PC-9 (cell line): ENCODE measurements at regions of chr7 and their contacts with region 1.

Region 1: DNA sequence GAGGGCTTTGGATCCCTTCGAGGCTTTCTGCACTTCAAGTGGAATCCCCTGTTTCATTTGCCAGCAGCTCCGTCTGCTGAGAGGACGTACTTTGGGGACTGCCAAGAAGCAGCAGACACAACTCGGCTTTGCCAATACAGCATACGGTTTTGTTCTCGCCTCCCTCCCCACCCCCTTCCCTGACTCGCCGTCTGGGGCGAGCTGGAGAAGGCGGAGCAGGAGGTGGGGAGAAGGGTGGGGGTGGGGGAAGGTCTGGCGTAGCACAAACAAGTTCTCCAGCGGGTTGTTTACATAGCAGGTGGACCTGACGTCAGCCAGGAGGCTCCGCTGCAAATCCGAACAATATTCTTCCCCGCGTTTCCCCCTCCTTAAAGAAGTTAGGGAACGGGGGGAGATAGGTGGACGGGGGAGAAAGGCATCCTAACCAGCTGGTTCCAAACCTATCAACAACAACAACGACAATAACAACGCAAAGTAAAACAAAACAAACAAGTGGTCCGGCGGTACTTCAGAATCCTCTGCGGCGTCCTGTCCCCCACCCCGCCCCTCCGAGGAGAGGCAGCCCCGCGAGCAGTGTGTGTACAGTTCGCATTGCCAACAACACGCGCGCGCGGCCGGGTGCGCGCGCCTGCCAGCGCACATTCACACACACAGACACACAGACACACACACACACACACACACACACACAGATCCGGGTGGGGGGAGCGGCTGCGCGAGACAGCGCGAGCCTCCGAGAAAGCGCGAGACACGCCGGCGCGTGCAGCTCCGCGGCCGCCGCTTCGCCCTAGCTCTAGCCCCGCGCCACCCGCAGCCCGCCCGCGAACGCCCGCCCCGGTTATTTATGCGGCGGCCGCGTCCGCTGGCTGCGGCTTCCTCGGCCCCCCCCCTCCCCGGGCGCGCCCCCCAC is 167.0 kb upstream of the PPP1R3A start:
- DNase-seq: peak; percentile 77 to 82
- H3K4me3 ChIP-seq: peak overlapping the region; percentile 88
- H3K27ac ChIP-seq: peak overlapping the region; percentile 20; the same call in 1 of the 2 replicates
- H3K4me1 ChIP-seq: peaks cover 11% of the 10 kb centered on the region; the same call in 1 of the 2 replicates
- H3K27me3 ChIP-seq: peaks cover 5% of the 10 kb centered on the region
- CTCF ChIP-seq: no peak

Region 2: DNA sequence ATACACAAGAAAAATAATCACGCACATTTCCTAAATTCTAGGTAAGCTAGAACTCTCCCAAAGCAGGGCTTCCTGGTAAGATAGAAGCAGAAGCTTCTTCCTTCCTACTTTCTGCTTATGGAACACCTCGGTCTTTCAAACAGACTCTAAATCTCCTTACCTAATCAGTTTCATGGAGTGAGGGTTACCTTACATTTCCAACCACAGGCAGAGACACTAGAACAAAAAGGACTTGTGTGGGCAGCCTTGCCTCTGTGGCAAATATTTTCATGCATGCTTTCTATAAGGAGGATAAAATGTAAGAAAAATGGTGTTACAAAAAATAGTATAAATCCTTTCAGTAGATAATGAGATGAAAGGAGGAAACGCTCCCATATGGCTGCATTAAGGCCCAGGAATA is 581.2 kb before region 1 on chr7:
- CTCF ChIA-PET with region 1: no interaction called
- POLR2A ChIA-PET with region 1: no interaction called
- intact Hi-C with region 1: no loop called
- DNase-seq: no peak
- H3K4me3 ChIP-seq: no peak overlapping the region
- H3K27ac ChIP-seq: no peak overlapping the region
- H3K4me1 ChIP-seq: no peaks in the 10 kb centered on the region
- H3K27me3 ChIP-seq: no peaks in the 10 kb centered on the region
- CTCF ChIP-seq: no peak

Region 3: GRCh38 chr7:114026486-114027089 is 59.3 kb before region 1 on chr7:
- CTCF ChIA-PET with region 1: interaction called, 3 read pairs
- POLR2A ChIA-PET with region 1: no interaction called
- intact Hi-C with region 1: loop called (anchors 2 kb)
- DNase-seq: no peak
- H3K4me3 ChIP-seq: no peak overlapping the region
- H3K27ac ChIP-seq: no peak overlapping the region
- H3K4me1 ChIP-seq: no peaks in the 10 kb centered on the region
- H3K27me3 ChIP-seq: no peaks in the 10 kb centered on the region
- CTCF ChIP-seq: peak; percentile 76

Region 4: DNA sequence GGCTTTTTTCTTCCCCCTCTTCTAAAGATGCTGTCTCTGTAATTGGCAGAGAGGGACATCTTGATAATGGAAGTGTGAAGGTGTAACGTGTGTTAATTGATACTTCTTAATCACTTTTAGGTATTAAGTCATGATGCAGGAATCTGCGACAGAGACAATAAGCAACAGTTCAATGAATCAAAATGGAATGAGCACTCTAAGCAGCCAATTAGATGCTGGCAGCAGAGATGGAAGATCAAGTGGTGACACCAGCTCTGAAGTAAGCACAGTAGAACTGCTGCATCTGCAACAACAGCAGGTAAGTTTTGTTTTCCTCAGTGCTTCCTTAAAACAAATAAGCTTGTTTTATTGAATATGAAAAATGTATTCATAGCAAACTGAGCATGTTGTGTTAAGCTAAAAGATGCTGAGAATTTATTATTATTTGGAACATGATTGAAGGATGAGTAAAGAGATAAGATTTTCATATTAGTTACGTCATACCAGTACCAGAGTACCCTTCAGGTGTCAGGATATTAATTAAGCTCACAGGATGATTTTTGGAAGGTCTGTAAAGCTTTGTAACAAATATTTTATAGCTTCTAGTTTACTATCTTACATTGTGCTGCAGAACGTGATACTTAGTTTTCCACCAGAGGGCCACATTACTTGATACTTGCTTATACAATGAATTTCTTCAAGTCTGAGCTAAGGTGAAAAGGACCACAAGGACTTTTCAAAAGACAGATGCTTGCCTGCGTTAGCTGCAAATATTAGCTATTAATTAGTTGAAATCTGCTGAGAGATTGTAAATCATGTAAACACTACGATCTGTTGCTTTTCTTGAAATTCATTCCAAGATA is 340.8 kb after region 1 on chr7:
- CTCF ChIA-PET with region 1: interaction called, 7 read pairs
- POLR2A ChIA-PET with region 1: no interaction called
- intact Hi-C with region 1: loop called (anchors 5 kb)
- DNase-seq: no peak
- H3K4me3 ChIP-seq: no peak overlapping the region
- H3K27ac ChIP-seq: no peak overlapping the region
- H3K4me1 ChIP-seq: no peaks in the 10 kb centered on the region
- H3K27me3 ChIP-seq: no peaks in the 10 kb centered on the region
- CTCF ChIP-seq: peak; percentile 43; the same call in 1 of the 2 replicates

Region 5: GRCh38 chr7:114865564-114865963 is 779.7 kb after region 1 on chr7:
- CTCF ChIA-PET with region 1: no interaction called
- POLR2A ChIA-PET with region 1: no interaction called
- intact Hi-C with region 1: loop called (anchors 10 kb)
- DNase-seq: peak in 1 of 2 experiments; percentile 35
- H3K4me3 ChIP-seq: no peak overlapping the region
- H3K27ac ChIP-seq: no peak overlapping the region
- H3K4me1 ChIP-seq: no peaks in the 10 kb centered on the region
- H3K27me3 ChIP-seq: no peaks in the 10 kb centered on the region
- CTCF ChIP-seq: peak; percentile 69

Region 6: GRCh38 chr7:114988755-114989375 is 903.0 kb after region 1 on chr7:
- CTCF ChIA-PET with region 1: no interaction called
- POLR2A ChIA-PET with region 1: no interaction called
- intact Hi-C with region 1: loop called (anchors 10 kb)
- DNase-seq: peak in 1 of 2 experiments; percentile 61
- H3K4me3 ChIP-seq: no peak overlapping the region
- H3K27ac ChIP-seq: peak overlapping the region; percentile 40
- H3K4me1 ChIP-seq: peaks cover 16% of the 10 kb centered on the region
- H3K27me3 ChIP-seq: no peaks in the 10 kb centered on the region
- CTCF ChIP-seq: no peak

Region 7: DNA sequence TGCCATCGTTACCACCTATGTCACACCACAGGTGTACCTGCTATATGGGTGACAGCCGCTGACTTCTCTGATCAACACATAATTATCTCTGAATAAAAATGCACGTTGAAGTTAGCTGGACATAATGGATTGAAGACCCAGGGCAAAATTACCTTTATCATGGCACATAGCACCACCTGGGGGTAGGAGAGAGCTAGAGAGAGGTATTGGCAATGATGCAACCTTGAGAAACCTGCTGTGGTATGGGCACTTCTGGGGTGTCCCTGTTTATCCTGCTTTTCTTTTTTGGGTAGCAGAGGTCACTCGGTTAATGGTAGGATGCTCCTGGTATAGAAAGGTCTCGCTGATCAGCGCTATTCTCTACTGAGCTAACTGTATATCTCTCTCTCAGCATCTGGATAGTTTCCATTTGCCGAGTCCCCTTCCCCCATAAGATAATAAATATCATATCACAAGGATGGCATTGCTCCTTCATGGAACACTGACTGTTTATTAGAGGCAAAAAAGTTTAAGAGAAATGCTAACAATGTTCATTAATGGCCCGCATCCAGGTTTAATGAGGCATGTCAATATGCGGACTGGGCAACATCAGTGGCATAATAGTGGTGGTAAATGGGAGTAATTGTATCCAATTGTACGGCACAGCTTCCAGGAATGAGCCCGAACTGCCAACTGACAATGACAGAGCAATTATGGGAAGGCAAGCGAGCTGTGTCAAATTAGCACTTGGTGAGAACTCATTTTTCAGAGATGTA is 1621.6 kb after region 1 on chr7:
- CTCF ChIA-PET with region 1: no interaction called
- POLR2A ChIA-PET with region 1: no interaction called
- intact Hi-C with region 1: loop called (anchors 2 kb)
- DNase-seq: peak in 1 of 2 experiments; percentile 31
- H3K4me3 ChIP-seq: no peak overlapping the region
- H3K27ac ChIP-seq: no peak overlapping the region
- H3K4me1 ChIP-seq: no peaks in the 10 kb centered on the region
- H3K27me3 ChIP-seq: no peaks in the 10 kb centered on the region
- CTCF ChIP-seq: peak; percentile 45; the same call in 1 of the 2 replicates

Region 8: DNA sequence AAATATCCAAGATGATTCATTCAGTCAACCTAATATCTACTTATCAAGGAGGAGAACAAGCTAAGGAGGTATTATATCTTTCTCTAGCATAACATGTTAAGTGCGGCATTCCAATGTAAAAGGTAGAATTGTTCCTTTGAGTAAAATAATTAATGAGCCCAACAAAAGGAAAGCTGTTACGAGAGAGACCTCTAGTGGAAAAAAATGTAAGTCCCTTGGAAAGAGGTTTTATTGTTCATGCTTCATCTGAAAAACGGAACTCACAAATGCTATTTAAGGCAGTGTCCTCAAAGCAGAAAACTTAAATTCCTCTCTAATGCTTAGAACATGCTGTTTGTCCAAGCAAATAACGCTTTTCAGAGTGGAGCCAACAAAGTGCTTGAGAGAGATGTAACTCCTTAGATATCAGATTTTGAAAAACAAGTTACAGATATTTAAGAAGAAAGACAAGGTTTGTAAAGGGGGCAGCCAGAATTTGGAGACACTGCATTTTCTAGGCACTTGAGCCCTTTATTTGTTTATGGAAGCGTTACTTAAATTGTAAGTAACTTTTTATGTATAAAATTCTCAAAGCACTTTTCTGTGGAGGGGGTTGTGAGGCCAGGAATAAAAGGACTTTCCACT is 1824.8 kb after region 1 on chr7:
- CTCF ChIA-PET with region 1: no interaction called
- POLR2A ChIA-PET with region 1: no interaction called
- intact Hi-C with region 1: loop called (anchors 1 kb)
- DNase-seq: peak in 1 of 2 experiments; percentile 54
- H3K4me3 ChIP-seq: no peak overlapping the region
- H3K27ac ChIP-seq: no peak overlapping the region
- H3K4me1 ChIP-seq: no peaks in the 10 kb centered on the region; the same call in 1 of the 2 replicates
- H3K27me3 ChIP-seq: no peaks in the 10 kb centered on the region
- CTCF ChIP-seq: peak; percentile 66; the same call in 1 of the 2 replicates